H1 (cell line): ENCODE measurements at regions of chr14 and their contacts with region 1.

Region 1: DNA sequence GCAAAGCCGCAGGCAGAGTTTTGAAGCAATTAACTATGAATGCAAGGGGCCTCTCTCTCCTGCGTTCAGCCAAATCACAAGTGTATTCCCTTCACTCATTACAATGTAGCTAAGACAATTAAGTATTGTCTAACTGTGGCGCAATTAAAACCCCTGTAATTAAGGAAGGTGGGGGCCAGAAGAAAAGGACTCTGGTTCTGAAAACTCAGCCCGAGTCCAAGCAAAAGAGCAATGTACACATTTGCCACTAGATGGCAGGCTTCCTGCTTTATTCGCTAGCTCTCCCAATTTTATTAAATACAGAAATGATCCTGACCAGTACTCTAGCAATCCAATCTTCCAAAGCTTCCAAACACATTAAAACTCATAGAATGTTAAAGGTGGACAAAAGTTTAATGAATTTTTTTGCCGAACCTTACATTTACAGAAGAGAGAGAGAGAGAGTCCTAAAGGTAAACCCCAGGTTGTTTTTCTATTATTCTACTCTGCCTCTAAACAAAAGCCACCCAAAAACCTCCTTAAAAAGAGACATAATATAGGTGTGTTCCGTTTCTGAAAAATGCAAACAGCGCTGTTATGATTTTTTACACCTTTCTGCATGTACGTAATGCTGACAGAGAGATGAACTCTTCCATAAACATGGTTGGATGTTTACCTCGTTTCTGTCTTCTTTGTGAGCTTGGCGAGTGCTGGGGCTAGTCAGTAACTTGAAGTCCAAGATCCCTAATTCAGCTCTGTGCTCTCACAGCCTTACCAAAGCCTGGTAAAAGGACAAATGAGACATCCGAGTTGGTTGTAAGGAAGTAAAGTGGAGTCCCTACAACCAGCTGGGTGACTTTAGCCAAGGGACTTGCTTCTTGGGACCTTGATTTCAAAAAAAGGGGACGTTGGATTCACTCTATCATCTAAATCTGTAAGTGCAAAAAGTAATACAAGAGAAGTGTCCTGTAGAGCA is 50.9 kb upstream of the VASH1 start:
- DNase-seq: peak in 1 of 2 experiments; percentile 46
- H3K4me3 ChIP-seq: no peak overlapping the region
- H3K27ac ChIP-seq: no peak overlapping the region
- H3K4me1 ChIP-seq: no peaks in the 10 kb centered on the region
- H3K27me3 ChIP-seq: no peaks in the 10 kb centered on the region
- CTCF ChIP-seq: peak; percentile 1 to 72 (median 60)
- EP300 ChIP-seq: no peak
- POLR2A ChIP-seq: no peak
- RAD21 ChIP-seq: peak; percentile 74 to 76

Region 2: GRCh38 chr14:76720382-76720813 is 10.1 kb after region 1 on chr14:
- CTCF ChIA-PET with region 1: interaction called, 33 read pairs
- POLR2A ChIA-PET with region 1: no interaction called
- DNase-seq: no peak
- H3K4me3 ChIP-seq: no peak overlapping the region
- H3K27ac ChIP-seq: no peak overlapping the region
- H3K4me1 ChIP-seq: peaks cover 0 to 8% (median 3%) of the 10 kb centered on the region in 4 experiments; a peak in 3 of 7 replicates
- H3K27me3 ChIP-seq: no peaks in the 10 kb centered on the region
- CTCF ChIP-seq: no peak
- EP300 ChIP-seq: no peak
- POLR2A ChIP-seq: no peak
- RAD21 ChIP-seq: no peak

Region 3: DNA sequence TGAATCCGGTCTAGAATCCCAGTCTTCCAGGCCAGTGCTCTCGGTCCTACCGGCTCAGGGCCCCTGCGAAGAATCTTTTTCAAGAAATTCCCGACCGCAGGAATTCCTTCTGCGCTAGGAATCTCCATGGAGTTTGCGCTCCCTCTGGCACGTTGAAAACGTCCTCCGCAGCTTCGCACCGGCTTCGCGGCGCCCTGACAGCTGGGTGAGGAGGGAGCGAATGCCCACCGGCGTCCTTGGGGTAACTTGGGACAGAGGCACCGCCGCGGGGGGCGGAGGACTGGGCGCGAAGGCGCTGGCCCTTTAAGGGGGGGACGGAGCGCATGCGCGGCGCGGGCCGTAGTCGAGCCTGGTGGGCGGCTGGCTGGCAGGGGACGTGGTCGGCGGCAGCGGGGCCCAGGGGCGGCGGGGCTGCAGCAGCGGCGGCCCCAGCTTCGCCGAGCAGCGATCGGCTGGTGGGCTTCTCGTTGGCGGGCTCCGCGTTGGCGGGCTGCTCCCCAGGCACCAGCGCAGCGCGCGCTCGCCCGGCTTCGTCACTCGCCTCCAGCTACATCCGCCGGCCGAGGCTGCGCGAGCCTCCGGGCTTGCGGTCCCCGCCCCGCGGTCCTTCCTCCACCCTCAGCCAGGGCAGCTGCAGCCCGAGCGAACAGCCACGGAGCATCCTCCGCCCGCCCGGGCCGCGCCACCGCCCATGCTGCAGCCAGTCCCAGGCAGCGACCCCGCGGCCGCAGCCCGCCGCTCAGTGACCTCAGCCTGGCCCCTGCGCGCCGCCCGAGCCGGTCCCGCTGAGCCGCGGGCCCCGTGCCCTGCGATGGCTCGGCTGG is 51.0 kb after region 1 on chr14 and contains the start of gene VASH1:
- CTCF ChIA-PET with region 1: interaction called, 48 read pairs
- POLR2A ChIA-PET with region 1: no interaction called
- DNase-seq: peak in 1 of 2 experiments; percentile 86
- H3K4me3 ChIP-seq: peak within 1 kb of the TSS; percentile 52 to 66 (median 59)
- H3K27ac ChIP-seq: no peak within 1 kb of the TSS
- H3K4me1 ChIP-seq: peaks cover 0 to 13% (median 2%) of the 10 kb centered on the region in 4 experiments; a peak in 5 of 7 replicates
- H3K27me3 ChIP-seq: peaks cover 24 to 52% (median 41%) of the 10 kb centered on the region in 4 experiments
- CTCF ChIP-seq: no peak
- EP300 ChIP-seq: no peak
- POLR2A ChIP-seq: no peak
- RAD21 ChIP-seq: no peak
- total RNA-seq, gene VASH1: 6.4 and 7.7 TPM in 2 replicates

Region 4: GRCh38 chr14:76806446-76806845 is 96.1 kb after region 1 on chr14:
- CTCF ChIA-PET with region 1: interaction called, 18 read pairs
- POLR2A ChIA-PET with region 1: no interaction called
- DNase-seq: no peak
- H3K4me3 ChIP-seq: no peak overlapping the region
- H3K27ac ChIP-seq: no peak overlapping the region
- H3K4me1 ChIP-seq: peaks cover 0 to 4% (median 1%) of the 10 kb centered on the region in 4 experiments; a peak in 3 of 7 replicates
- H3K27me3 ChIP-seq: no peaks in the 10 kb centered on the region
- CTCF ChIP-seq: no peak
- EP300 ChIP-seq: no peak
- POLR2A ChIP-seq: no peak
- RAD21 ChIP-seq: no peak